ENCODE measurements at regions of chr16 and their contacts with region 1.

Region 1: GRCh38 chr16:47037746-47038458 is 64.4 kb upstream of the DNAJA2 start:
- DNase-seq: no peak
- H3K4me3 ChIP-seq: peak overlapping the region; percentile 70
- CTCF ChIP-seq: peak; percentile 99

Region 2: DNA sequence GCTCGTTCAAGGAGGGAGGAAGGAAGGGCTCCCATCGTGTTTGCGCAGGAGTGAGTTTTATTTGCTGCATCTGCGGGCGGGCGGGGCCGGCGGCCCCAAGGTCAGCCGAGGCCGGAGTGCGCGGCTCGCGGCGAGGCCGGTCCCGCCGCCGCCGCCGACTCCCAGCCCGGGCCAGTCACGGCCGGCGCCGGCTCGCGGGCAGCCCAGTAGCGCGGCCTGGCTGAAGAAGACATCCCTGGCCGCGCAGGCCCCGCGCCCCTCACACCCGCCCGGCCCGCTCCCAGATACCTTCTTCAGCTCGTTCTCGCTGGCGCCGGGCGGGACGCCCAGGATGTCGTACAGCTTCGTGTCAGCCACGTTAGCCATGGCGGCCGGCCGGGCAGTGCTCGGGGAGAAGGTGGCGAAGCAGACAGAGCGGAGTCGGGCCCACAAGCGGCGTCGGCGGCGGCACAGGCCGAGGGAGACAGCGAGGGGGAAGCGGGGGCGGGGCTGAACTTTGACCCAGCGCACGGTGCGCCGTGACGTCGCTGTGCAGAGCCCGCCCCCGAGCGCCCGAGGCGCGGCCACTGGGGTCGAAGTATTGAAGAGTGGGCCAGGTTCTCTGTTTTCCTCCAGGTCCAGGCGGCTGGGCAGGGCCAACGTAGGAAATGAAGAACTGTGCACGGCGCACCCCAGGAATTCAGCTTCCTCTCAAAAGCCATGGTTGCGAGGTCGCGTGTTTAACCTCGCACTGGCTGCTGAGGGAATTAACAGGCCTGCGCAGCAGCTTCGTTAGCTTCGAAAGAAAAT is 64.5 kb before region 1 on chr16 and contains the start of gene DNAJA2:
- CTCF ChIA-PET with region 1: no interaction called
- POLR2A ChIA-PET with region 1: no interaction called
- DNase-seq: no peak
- H3K4me3 ChIP-seq: peak within 1 kb of the TSS; percentile 93
- CTCF ChIP-seq: no peak

Region 3: DNA sequence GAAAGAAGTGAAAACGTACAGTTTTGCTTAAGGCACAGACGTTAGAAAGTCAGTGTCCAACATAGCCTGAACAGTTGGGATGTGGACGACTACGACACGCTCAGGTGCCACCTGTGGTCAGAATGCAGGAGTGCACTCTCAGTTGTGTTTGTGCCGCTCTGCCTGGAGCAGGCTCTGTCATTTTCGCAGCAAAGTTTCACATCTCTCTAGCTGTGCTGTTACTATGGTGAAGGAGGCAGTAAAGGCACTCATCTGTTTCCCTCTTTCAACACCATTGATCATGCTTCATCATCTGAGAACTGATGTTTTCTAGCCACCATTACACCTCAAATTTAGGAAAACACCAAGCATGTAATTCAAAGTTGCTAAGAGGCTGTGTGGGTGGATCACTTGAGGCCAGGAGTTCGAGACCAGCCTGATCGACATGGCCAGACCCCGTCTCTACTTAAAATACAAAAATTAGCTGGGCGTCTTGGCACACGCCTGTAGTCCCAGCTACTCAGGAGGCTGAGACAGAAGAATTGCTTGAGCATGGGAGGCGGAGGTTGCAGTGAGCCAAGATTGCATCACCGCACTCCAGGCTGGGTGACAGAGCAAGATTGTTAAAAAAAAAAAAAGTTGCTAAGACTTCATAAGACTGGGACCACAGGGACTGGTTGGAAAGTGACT is 19.5 kb before region 1 on chr16:
- CTCF ChIA-PET with region 1: interaction called, 16 read pairs
- POLR2A ChIA-PET with region 1: no interaction called
- DNase-seq: no peak
- H3K4me3 ChIP-seq: no peak overlapping the region
- CTCF ChIP-seq: peak; percentile 26

Region 4: GRCh38 chr16:47058295-47059086 is 20.6 kb after region 1 on chr16:
- CTCF ChIA-PET with region 1: interaction called, 15 read pairs
- POLR2A ChIA-PET with region 1: no interaction called
- DNase-seq: no peak
- H3K4me3 ChIP-seq: no peak overlapping the region
- CTCF ChIP-seq: no peak

Region 5: DNA sequence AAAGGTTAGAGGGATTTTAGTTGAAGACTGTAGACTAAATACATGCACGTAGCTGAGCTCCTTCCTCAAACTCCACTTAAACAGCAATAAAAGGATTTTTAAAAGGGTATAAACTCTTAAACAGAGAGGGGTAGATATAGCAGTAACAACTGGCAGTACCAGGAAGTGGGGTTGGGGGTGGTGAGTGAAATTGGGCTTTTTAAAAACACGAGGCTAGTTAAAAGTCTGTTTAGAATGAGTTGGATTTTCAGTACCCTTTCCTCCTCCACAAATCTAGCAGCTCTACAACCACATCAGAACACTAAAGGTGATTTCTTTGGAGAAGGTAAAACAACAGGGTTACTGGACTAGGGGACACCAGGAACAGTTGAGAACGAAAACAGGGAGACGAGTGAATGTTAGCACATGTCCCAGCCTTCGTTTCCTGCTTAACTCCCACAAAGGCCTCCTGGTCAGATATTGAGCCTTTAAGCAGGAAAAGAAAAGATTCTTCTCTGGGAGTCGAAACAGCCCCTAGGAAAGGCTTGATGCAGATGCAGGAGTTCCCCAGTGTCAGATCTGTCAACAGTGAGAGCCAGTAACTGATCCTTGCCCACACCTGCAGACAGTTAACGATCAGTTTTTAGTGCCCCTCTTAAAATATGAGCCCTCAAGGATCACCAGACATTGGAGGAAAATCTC is 92.0 kb after region 1 on chr16:
- CTCF ChIA-PET with region 1: interaction called, 13 read pairs
- POLR2A ChIA-PET with region 1: no interaction called
- DNase-seq: no peak
- H3K4me3 ChIP-seq: no peak overlapping the region
- CTCF ChIP-seq: no peak

Region 6: GRCh38 chr16:48156790-48157209 is 1118.9 kb after region 1 on chr16:
- CTCF ChIA-PET with region 1: interaction called, 11 read pairs
- POLR2A ChIA-PET with region 1: no interaction called
- DNase-seq: peak; percentile 16
- H3K4me3 ChIP-seq: no peak overlapping the region; the same call in 1 of the 2 replicates
- CTCF ChIP-seq: peak; percentile 95

Region 7: GRCh38 chr16:48164907-48165726 is 1127.2 kb after region 1 on chr16:
- CTCF ChIA-PET with region 1: interaction called, 38 read pairs
- POLR2A ChIA-PET with region 1: no interaction called
- DNase-seq: no peak
- H3K4me3 ChIP-seq: no peak overlapping the region
- CTCF ChIP-seq: peak; percentile 92

Measured in AG04449 (cell line).